Tibial artery (tissue), 4 donors: ENCODE measurements at regions of chr17 and their contacts with region 1.

Region 1: DNA sequence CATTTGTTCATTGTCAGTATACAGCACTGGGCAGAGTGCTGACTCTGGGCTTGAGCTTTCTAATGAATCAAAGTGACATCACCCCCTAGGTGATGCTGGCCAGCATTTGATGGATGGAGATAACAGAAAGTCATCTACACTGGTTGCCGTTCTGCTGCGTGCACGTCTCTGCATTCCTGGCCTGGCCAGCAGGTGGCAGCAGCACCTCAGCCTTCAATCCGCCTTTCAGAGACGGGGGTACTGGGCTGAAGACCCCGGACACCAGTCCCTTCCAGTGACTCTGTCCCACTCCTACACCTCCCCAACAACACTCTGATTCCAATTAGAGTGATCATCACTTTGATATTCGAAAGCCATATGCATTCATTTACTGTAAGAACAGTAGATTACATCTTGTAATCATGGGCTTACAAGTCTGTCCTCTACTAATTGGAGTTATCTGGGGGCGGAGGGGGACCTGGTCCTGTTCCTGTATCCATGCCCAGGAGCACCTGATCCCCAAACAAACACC is 6.0 kb downstream of the CPSF4L start:
- DNase-seq: peak in 1 of 2 donors; percentile 70
- H3K4me3 ChIP-seq: no peak overlapping the region
- H3K27ac ChIP-seq: no peak overlapping the region
- H3K4me1 ChIP-seq: peaks cover 0 to 7% (median 0%) of the 10 kb centered on the region in 4 donors
- H3K27me3 ChIP-seq: no peaks in the 10 kb centered on the region
- CTCF ChIP-seq: peak; percentile 99

Region 2: GRCh38 chr17:73368085-73368631 is 112.4 kb after region 1 on chr17:
- intact Hi-C with region 1: loop called (anchors 1 kb)
- DNase-seq: no peak
- H3K4me3 ChIP-seq: no peak overlapping the region
- H3K27ac ChIP-seq: no peak overlapping the region
- H3K4me1 ChIP-seq: peaks cover 0 to 10% (median 0%) of the 10 kb centered on the region in 4 donors
- H3K27me3 ChIP-seq: peaks cover 0 to 5% of the 10 kb centered on the region in 2 donors
- CTCF ChIP-seq: no peak